ENCODE measurements at regions of chr4 and their contacts with region 1.

Region 1: DNA sequence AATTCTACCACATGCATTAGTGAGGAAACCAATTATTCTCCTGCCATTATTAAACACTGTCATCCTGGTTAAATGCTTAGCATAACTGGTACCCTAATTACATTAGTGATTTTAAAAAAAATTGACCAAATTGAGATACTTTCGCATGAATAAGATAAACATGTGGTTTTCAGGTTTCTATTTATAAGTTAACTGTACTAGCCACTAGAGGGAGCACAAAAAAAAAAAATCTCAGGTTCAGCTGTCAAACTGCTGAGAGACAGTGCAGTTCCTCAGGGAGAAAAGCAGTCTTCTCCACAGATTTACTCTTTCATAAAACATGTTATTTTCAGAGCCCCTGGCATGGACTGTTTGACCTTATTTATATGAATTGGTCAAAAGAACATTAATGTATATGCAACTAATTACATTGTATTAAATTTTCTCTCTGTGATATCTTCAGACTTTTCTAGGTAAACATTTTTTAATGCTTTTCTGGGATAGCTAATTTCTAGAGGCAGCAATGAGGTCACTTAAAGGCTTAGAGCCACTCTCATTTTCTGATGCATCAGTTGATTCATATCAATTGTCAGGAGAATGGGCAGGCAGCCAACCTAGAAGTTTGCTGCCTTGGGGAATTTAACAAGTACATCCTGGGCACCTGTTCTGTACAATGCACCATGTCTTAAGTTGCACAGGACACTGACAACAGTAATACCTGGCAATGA is 167.5 kb downstream of the CDS1 start:
- DNase-seq: peak in 3 of 5 donors; percentile 3 to 11 (median 6)
- H3K4me3 ChIP-seq: no peak overlapping the region
- H3K4me3 Mint-ChIP-seq: no peak overlapping the region
- H3K27ac ChIP-seq: no peak overlapping the region
- H3K27ac Mint-ChIP-seq: no peak overlapping the region
- H3K4me1 ChIP-seq: no peaks in the 10 kb centered on the region
- H3K4me1 Mint-ChIP-seq: peaks cover 0 to 2% (median 0%) of the 10 kb centered on the region in 4 donors
- H3K27me3 ChIP-seq: no peaks in the 10 kb centered on the region
- H3K27me3 Mint-ChIP-seq: peaks cover 0 to 5% of the 10 kb centered on the region in 2 donors

Region 2: DNA sequence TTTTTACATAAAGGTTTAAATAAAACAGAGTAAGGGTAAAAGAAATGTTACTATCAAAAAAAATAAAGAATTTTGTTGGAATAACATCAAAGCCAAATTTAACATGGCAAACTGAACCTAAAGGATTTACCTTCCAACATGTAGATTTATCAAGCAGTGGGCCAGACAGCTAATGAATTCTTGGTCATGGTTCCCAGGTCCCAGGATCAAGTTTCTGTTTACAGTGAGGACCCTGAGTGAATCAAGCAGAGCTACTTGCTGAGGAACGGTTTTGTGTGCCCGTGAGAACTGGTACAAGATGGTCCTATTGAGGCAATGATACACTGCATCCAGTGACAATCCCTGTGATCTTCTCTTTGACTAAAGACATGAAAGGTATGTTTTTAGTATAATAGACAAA is 10.3 kb before region 1 on chr4:
- CTCF ChIA-PET with region 1: interaction called, 10 read pairs
- POLR2A ChIA-PET with region 1: no interaction called
- intact Hi-C with region 1: no loop called
- DNase-seq: no peak
- H3K4me3 ChIP-seq: no peak overlapping the region
- H3K4me3 Mint-ChIP-seq: no peak overlapping the region
- H3K27ac ChIP-seq: no peak overlapping the region
- H3K27ac Mint-ChIP-seq: no peak overlapping the region
- H3K4me1 ChIP-seq: no peaks in the 10 kb centered on the region
- H3K4me1 Mint-ChIP-seq: no peaks in the 10 kb centered on the region
- H3K27me3 ChIP-seq: no peaks in the 10 kb centered on the region
- H3K27me3 Mint-ChIP-seq: peaks cover 0 to 5% of the 10 kb centered on the region in 2 donors

Region 3: GRCh38 chr4:84855774-84856173 is 105.4 kb after region 1 on chr4:
- CTCF ChIA-PET with region 1: no interaction called
- POLR2A ChIA-PET with region 1: no interaction called
- intact Hi-C with region 1: no loop called
- DNase-seq: no peak
- H3K4me3 ChIP-seq: no peak overlapping the region
- H3K4me3 Mint-ChIP-seq: no peak overlapping the region
- H3K27ac ChIP-seq: no peak overlapping the region
- H3K27ac Mint-ChIP-seq: no peak overlapping the region
- H3K4me1 ChIP-seq: no peaks in the 10 kb centered on the region
- H3K4me1 Mint-ChIP-seq: no peaks in the 10 kb centered on the region
- H3K27me3 ChIP-seq: no peaks in the 10 kb centered on the region
- H3K27me3 Mint-ChIP-seq: peaks cover 0 to 1% of the 10 kb centered on the region in 2 donors

Region 4: GRCh38 chr4:84971319-84971932 is 221.0 kb after region 1 on chr4:
- CTCF ChIA-PET with region 1: interaction called, 4 read pairs
- POLR2A ChIA-PET with region 1: no interaction called
- intact Hi-C with region 1: loop called (anchors 1 kb)
- DNase-seq: peak in 1 of 5 donors; percentile 15
- H3K4me3 ChIP-seq: no peak overlapping the region
- H3K4me3 Mint-ChIP-seq: no peak overlapping the region
- H3K27ac ChIP-seq: no peak overlapping the region
- H3K27ac Mint-ChIP-seq: no peak overlapping the region
- H3K4me1 ChIP-seq: no peaks in the 10 kb centered on the region
- H3K4me1 Mint-ChIP-seq: peaks cover 6 to 11% (median 9%) of the 10 kb centered on the region in 4 donors
- H3K27me3 ChIP-seq: no peaks in the 10 kb centered on the region
- H3K27me3 Mint-ChIP-seq: peaks cover 15 to 19% of the 10 kb centered on the region in 2 donors

Region 5: GRCh38 chr4:84995386-84995785 is 245.0 kb after region 1 on chr4:
- CTCF ChIA-PET with region 1: no interaction called
- POLR2A ChIA-PET with region 1: no interaction called
- intact Hi-C with region 1: no loop called
- DNase-seq: no peak
- H3K4me3 ChIP-seq: no peak overlapping the region
- H3K4me3 Mint-ChIP-seq: no peak overlapping the region
- H3K27ac ChIP-seq: no peak overlapping the region
- H3K27ac Mint-ChIP-seq: no peak overlapping the region
- H3K4me1 ChIP-seq: no peaks in the 10 kb centered on the region
- H3K4me1 Mint-ChIP-seq: no peaks in the 10 kb centered on the region
- H3K27me3 ChIP-seq: no peaks in the 10 kb centered on the region
- H3K27me3 Mint-ChIP-seq: no peaks in the 10 kb centered on the region

Region 6: DNA sequence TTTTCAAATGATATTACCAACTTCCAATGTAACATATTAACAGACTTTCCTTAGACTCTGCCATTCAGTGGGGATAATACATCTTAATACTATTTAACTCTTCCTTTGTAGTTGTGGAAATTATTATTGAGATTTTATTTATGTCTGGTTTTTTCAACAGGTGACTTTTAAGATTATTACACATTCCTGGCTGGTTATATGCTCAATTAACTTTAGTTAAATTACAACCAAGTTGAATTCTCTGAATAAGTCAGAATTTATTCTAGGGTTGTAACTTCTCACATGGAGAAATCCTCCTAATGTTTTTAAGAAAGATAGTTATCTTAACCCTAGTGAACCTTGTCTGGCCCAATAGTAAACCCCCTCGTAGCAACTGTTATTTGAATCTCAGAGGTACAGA is 1991.4 kb after region 1 on chr4:
- CTCF ChIA-PET with region 1: no interaction called
- POLR2A ChIA-PET with region 1: no interaction called
- intact Hi-C with region 1: no loop called
- DNase-seq: no peak
- H3K4me3 ChIP-seq: no peak overlapping the region
- H3K4me3 Mint-ChIP-seq: no peak overlapping the region
- H3K27ac ChIP-seq: no peak overlapping the region
- H3K27ac Mint-ChIP-seq: no peak overlapping the region
- H3K4me1 ChIP-seq: no peaks in the 10 kb centered on the region
- H3K4me1 Mint-ChIP-seq: no peaks in the 10 kb centered on the region
- H3K27me3 ChIP-seq: no peaks in the 10 kb centered on the region
- H3K27me3 Mint-ChIP-seq: peaks cover 1 to 3% of the 10 kb centered on the region in 2 donors